Mammary epithelial cell (primary cell): ENCODE measurements at regions of chr1 and their contacts with region 1.

Region 1: GRCh38 chr1:155167166-155168104 is 5.7 kb downstream of the KRTCAP2 start:
- DNase-seq: peak; percentile 71
- H3K4me3 ChIP-seq: peak overlapping the region in 2 of 3 experiments; percentile 3 to 5
- H3K27ac ChIP-seq: no peak overlapping the region
- H3K4me1 ChIP-seq: peaks cover 11% of the 10 kb centered on the region
- H3K27me3 ChIP-seq: no peaks in the 10 kb centered on the region
- CTCF ChIP-seq: peak; percentile 91 to 96

Region 2: DNA sequence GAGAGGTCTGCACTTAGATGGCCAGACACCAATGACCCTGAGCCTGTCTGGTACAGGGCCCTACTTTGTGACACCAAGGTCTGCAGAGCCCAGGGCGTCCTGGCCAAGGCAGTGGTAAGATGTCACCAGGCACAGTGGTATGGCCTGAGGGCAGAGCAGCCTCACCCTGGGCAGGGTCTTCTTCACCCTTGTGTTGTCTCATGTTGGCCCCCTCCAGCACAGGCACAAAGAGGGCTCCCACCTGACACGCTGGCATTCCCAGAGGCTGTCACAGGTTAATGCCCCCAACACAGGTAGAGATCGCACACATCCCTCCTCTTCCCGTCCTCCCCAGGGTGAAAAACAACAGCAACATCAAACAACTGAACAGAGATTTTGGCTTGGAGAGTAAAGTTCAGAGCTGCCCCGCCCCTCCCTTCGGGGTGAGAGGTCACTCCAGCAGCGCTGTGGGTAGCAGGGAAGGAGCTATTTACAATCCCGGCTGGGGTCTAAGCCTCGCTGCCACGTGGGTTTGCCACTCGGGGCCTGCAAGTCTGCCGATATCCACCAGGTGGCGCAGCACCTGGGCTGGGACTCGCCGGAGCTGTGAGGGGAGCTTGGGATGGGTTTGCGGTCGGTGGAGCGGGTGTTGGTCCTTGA is 76.2 kb before region 1 on chr1:
- CTCF ChIA-PET with region 1: interaction called, 12 read pairs
- dilution Hi-C with region 1: no loop called
- in situ Hi-C with region 1: loop called (anchors 5 kb)
- intact Hi-C with region 1: loop called (anchors 1 kb)
- DNase-seq: peak; percentile 41
- H3K4me3 ChIP-seq: no peak overlapping the region
- H3K27ac ChIP-seq: no peak overlapping the region
- H3K4me1 ChIP-seq: peaks cover 11% of the 10 kb centered on the region
- H3K27me3 ChIP-seq: no peaks in the 10 kb centered on the region
- CTCF ChIP-seq: peak; percentile 96 to 97

Region 3: DNA sequence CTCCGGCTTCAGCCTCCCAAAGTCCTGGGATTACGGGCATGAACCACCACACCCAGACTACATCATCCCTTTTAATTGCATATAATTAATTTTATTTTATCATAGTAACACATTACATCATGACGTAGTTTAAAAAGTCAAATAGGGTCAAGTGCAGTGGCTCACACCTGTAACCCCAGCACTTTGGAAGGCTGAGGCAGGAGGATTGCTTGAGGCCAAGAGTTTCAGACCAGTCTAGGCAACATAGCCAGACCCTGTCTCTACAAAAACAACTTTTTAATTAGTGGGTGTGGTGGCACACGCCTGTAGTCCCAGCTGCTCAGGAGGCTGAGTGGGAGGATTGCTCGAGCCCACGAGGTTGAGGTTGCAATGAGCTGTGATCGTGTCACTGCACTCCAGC is 68.1 kb before region 1 on chr1:
- CTCF ChIA-PET with region 1: no interaction called
- dilution Hi-C with region 1: no loop called
- in situ Hi-C with region 1: loop called (anchors 5 kb)
- intact Hi-C with region 1: no loop called
- DNase-seq: no peak
- H3K4me3 ChIP-seq: no peak overlapping the region
- H3K27ac ChIP-seq: no peak overlapping the region
- H3K4me1 ChIP-seq: no peaks in the 10 kb centered on the region
- H3K27me3 ChIP-seq: no peaks in the 10 kb centered on the region
- CTCF ChIP-seq: no peak

Region 4: DNA sequence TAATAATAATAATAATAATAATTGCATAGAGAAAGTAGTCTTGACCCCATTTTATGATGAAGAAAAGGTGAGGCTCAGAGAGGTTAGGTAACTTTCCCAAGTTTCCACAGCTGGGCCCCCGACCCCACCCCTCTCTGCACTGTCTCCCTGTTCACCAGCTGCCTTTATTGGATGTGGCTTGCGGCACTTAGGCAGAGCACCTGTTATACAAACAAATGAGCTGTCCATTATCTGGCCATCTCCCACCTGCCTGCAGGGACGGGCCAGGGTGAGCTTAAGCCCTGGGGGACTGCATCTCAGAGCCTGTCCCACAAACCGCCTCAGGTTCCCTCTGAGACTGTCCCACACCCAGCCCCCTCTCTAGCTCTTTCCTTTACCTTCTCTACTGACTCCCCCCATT is 49.8 kb before region 1 on chr1:
- CTCF ChIA-PET with region 1: no interaction called
- dilution Hi-C with region 1: loop called (anchors 5 kb)
- in situ Hi-C with region 1: no loop called
- intact Hi-C with region 1: no loop called
- DNase-seq: no peak
- H3K4me3 ChIP-seq: no peak overlapping the region
- H3K27ac ChIP-seq: no peak overlapping the region
- H3K4me1 ChIP-seq: peaks cover 4% of the 10 kb centered on the region
- H3K27me3 ChIP-seq: no peaks in the 10 kb centered on the region
- CTCF ChIP-seq: no peak

Region 5: DNA sequence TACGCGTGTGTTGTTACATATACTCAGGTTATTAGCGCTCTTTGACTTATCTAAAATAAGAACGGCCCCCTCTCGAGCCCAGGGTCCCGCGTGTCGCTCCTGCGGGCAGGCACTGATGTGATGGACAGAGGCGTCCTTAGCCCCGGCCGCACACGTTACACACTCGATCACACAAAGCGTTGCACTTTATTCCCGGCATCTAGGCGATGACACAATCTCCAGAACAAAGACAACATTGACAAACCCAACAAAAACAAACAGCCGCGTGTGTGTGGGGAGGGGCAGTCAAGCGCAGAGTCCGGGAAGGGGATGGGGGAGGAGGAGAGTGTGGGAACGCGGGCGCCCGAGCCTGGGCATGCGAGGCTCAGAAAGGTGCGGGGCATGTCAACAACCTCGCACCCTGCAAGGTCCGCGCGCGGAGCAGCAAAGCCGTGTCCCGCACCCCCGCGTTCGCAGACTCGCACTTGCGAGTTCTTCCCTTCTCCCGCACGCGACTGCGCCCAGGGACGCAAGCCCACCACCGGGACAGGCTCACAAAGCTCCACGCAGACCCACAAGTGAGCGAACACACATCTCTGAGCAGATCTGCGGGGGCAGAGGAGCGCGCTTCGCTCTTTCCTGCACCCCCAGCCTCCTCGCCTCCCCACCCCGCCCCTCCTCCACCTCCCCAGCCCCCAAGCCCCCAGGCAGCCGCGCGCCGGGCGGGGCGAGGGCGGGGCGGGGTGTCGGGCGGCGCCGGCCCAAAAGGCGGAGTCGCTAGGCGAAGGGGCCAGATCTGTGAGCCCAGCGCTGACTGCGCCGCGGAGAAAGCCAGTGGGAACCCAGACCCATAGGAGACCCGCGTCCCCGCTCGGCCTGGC is 40.1 kb before region 1 on chr1 and contains the start of gene EFNA1:
- CTCF ChIA-PET with region 1: no interaction called
- dilution Hi-C with region 1: no loop called
- in situ Hi-C with region 1: no loop called
- intact Hi-C with region 1: loop called (anchors 1 kb)
- DNase-seq: peak; percentile 92
- H3K4me3 ChIP-seq: peak within 1 kb of the TSS; percentile 66 to 89 (median 76)
- H3K27ac ChIP-seq: peak within 1 kb of the TSS; percentile 92
- H3K4me1 ChIP-seq: peaks cover 65% of the 10 kb centered on the region
- H3K27me3 ChIP-seq: no peaks in the 10 kb centered on the region
- CTCF ChIP-seq: no peak
- total RNA-seq, gene EFNA1: 21.5 to 54.0 TPM

Region 6: DNA sequence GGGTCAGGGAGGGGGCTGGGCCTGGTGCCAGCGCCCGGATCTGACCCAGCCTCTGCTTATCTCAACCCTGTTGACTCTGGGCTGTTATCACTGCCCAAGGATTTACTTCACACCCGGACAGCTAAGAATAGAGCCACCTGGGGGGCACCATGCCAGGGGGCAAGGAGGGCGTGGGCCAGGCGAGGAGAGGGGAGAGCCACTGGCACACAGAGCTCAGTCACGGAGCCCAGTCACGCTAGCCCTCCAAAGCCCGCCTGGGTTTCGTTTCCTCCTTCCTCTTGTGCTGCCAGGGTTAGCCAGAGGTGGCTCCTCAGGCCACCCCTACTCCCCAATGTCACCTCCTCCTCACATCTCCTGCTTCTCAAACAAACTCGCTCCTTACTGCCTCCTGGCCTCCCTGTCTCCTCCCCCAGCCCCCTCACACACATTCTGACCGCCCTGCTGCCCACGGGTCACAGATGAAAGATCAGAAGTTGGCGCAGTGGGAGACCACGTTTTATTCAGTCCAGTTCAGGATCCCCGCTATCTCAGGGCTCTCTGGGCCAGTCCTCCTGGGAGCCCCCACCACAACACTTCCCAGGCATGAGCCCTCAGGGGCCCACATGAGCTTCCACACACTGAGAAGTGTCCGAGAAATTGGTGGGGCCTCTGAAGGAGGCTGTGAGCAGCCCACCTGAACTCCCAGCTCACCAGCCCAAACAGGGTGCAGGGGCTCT is 18.1 kb after region 1 on chr1:
- CTCF ChIA-PET with region 1: no interaction called
- dilution Hi-C with region 1: no loop called
- in situ Hi-C with region 1: no loop called
- intact Hi-C with region 1: no loop called
- DNase-seq: no peak
- H3K4me3 ChIP-seq: no peak overlapping the region
- H3K27ac ChIP-seq: no peak overlapping the region
- H3K4me1 ChIP-seq: peaks cover 10% of the 10 kb centered on the region
- H3K27me3 ChIP-seq: no peaks in the 10 kb centered on the region
- CTCF ChIP-seq: no peak